ENCODE measurements at regions of chr12 and their contacts with region 1.

Region 1: DNA sequence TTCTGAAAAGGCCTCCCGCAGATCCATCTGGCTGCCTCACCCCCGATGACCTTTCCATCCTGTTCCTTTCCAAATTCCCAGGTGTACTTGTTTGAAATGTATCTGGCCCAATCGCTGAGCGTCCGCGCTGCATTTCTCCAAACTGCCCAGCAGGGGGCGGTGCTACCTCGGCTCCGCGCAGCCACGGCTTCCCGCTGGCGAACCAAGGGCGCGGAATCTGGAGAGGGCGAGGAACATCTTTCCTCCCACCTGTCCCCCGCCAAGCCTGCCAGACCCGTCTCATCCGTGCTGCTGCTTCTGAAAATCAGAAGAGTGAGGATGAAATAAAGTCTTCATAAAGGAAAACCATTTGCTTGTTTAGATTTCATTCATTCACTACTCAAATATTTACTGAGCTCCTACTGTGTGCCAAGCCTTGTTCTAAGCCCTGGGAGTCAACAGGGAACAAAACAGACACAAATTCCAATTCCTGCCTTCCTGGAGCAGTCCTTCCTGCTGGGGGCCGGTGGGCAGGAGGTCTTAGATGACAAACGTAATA is 16.8 kb upstream of the MYL2 start:
- DNase-seq: peak; percentile 65 to 66
- ATAC-seq: peak; percentile 55 to 77; a peak in 5 of 6 replicates
- H3K4me3 ChIP-seq: no peak overlapping the region
- H3K27ac ChIP-seq: no peak overlapping the region; a peak in 1 of 6 replicates
- H3K4me1 ChIP-seq: peaks cover 23% of the 10 kb centered on the region
- CTCF ChIP-seq: peak; percentile 92
- EP300 ChIP-seq: no peak
- POLR2A ChIP-seq: no peak
- RAD21 ChIP-seq: peak; percentile 87 to 89

Region 2: DNA sequence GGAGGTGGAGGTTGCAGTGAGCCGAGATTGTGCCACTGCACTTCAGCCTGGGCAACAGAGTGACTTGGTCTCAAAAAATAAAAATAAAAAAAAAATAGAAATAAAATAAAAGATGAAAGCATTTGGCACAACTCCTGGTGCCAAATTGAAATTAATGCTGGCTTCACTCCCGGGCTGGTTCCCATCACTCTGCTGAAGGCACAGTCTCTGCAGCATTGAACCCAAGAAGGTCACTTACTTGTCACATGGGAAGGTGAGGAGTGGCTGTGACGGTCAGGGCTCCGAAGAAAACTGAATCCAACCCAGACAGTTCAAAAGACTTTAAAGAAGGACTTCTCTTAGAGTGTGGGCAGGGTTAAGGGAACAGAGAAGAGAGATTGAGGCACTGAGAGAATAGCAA is 100.9 kb before region 1 on chr12:
- CTCF ChIA-PET with region 1: no interaction called
- POLR2A ChIA-PET with region 1: no interaction called
- DNase-seq: no peak
- ATAC-seq: no peak
- H3K4me3 ChIP-seq: no peak overlapping the region
- H3K27ac ChIP-seq: no peak overlapping the region
- H3K4me1 ChIP-seq: no peaks in the 10 kb centered on the region
- CTCF ChIP-seq: no peak
- EP300 ChIP-seq: no peak
- POLR2A ChIP-seq: no peak
- RAD21 ChIP-seq: no peak

Region 3: GRCh38 chr12:110896559-110896958 is 40.6 kb before region 1 on chr12:
- CTCF ChIA-PET with region 1: interaction called, 71 read pairs
- POLR2A ChIA-PET with region 1: no interaction called
- DNase-seq: no peak
- ATAC-seq: no peak
- H3K4me3 ChIP-seq: no peak overlapping the region
- H3K27ac ChIP-seq: no peak overlapping the region; a peak in 1 of 6 replicates
- H3K4me1 ChIP-seq: peaks cover 9% of the 10 kb centered on the region
- CTCF ChIP-seq: no peak
- EP300 ChIP-seq: no peak
- POLR2A ChIP-seq: no peak
- RAD21 ChIP-seq: no peak

Region 4: GRCh38 chr12:110947729-110948448 is 10.7 kb after region 1 on chr12:
- CTCF ChIA-PET with region 1: interaction called, 26 read pairs
- POLR2A ChIA-PET with region 1: no interaction called
- DNase-seq: no peak
- ATAC-seq: no peak
- H3K4me3 ChIP-seq: no peak overlapping the region
- H3K27ac ChIP-seq: no peak overlapping the region
- H3K4me1 ChIP-seq: no peaks in the 10 kb centered on the region
- CTCF ChIP-seq: no peak
- EP300 ChIP-seq: no peak
- POLR2A ChIP-seq: no peak
- RAD21 ChIP-seq: no peak

Region 5: GRCh38 chr12:111274777-111275176 is 337.6 kb after region 1 on chr12:
- CTCF ChIA-PET with region 1: interaction called, 25 read pairs
- POLR2A ChIA-PET with region 1: no interaction called
- DNase-seq: peak in 1 of 2 experiments; percentile 63
- ATAC-seq: peak; percentile 55 to 76
- H3K4me3 ChIP-seq: no peak overlapping the region
- H3K27ac ChIP-seq: no peak overlapping the region
- H3K4me1 ChIP-seq: peaks cover 16% of the 10 kb centered on the region; the same call in 1 of the 3 replicates
- CTCF ChIP-seq: peak; percentile 41
- EP300 ChIP-seq: no peak
- POLR2A ChIP-seq: no peak
- RAD21 ChIP-seq: peak in 1 of 2 experiments; percentile 45; a peak in 1 of 5 replicates

Region 6: GRCh38 chr12:111313833-111314259 is 376.7 kb after region 1 on chr12:
- CTCF ChIA-PET with region 1: interaction called, 10 read pairs
- POLR2A ChIA-PET with region 1: no interaction called
- DNase-seq: peak; percentile 76 to 95
- ATAC-seq: peak; percentile 78 to 88
- H3K4me3 ChIP-seq: no peak overlapping the region
- H3K27ac ChIP-seq: no peak overlapping the region
- H3K4me1 ChIP-seq: no peaks in the 10 kb centered on the region
- CTCF ChIP-seq: peak; percentile 87
- EP300 ChIP-seq: no peak
- POLR2A ChIP-seq: no peak
- RAD21 ChIP-seq: peak; percentile 81 to 92